ENCODE measurements at regions of chr18 and their contacts with region 1.

Region 1: DNA sequence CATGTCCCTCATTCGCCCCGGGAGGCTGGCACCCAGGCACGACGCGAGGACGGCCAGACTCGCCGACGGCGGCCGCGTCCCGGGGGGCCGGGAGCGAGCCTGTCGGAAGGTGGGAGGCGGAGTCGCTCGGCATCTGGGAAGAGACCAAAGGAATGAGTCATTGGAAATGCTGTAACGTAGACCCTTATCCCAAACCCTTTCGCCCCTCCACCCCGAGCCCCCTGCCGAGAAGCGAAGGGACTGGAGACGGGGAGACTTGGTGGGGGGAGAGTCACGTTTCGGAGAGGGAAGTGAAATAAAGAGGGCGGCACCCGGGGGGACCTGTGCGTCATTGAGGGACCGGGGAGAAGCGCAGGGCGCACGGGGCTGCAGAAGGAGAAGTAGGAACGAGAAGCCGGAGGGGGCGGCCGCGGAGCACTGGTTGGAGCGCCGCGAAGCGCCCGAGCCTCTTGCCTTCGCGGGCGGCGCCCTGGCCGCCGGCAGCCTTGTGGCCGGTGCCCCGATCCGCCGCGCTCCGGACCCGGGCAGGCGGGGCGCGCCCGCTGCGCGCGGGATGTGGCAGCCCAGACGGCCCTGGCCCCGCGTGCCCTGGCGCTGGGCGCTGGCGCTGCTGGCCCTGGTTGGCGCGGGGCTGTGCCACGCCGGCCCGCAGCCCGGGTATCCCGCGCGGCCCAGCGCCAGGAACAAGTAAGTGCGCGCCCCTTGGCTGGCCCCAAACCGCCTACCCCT is at the start of gene EMILIN2:
- DNase-seq: peak; percentile 93
- ATAC-seq: peak; percentile 82
- H3K4me3 ChIP-seq: peak within 1 kb of the TSS; percentile 54 to 76 (median 61)
- H3K4me3 Mint-ChIP-seq: peak within 1 kb of the TSS; percentile 99
- H3K27ac ChIP-seq: peak within 1 kb of the TSS; percentile 56 to 65
- H3K27ac Mint-ChIP-seq: peak within 1 kb of the TSS; percentile 91
- H3K4me1 ChIP-seq: peaks cover 14 to 37% of the 10 kb centered on the region in 2 donors
- H3K4me1 Mint-ChIP-seq: peaks cover 40% of the 10 kb centered on the region
- H3K27me3 ChIP-seq: peaks cover 0 to 41% (median 21%) of the 10 kb centered on the region in 4 experiments
- H3K27me3 Mint-ChIP-seq: peaks cover 18% of the 10 kb centered on the region
- CTCF ChIP-seq: peak; percentile 39
- total RNA-seq, gene EMILIN2: 48.2 and 52.7 TPM in 2 replicates

Region 2: DNA sequence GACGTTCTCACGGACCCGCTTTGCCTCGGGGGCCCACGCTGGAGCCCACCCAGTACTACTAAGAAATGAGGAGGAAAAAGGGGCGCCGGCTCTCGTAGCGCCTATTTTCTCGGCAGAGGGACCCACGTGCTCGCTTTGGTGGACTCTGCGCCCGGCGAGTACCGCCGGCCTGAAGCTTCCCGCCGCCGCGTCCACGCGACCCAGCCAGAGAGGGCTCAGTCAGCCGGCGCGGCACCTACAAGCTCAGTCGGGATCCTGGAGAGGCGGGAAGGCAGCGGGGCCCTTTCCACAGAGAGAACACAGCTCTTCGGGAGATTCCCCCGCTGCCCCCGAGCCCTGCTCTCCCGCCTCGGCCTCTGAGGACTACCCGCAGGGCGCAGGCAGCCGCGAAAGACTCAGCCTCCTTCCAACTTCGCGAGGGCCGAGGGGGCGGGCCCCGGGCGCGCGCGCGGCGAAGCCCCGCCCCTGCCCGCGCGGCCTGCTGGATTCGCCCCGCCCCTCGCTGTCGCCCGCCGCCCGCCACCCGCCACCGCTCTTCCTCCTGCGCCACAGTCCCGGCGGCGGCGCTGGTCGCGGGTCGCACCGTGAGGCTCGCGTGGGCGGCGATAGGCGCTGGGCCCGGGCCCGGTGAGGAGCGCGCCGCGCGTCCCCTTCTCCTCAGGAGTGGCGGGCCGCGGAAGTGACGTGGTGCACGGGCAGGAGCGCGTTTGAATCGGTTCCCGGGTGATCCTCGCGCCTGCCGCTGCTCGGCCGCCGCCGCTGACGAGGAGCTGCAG is 191.4 kb before region 1 on chr18 and contains the start of gene SMCHD1:
- CTCF ChIA-PET with region 1: no interaction called
- POLR2A ChIA-PET with region 1: no interaction called
- intact Hi-C with region 1: loop called (anchors 5 kb)
- DNase-seq: peak; percentile 96
- ATAC-seq: peak; percentile 78
- H3K4me3 ChIP-seq: peak within 1 kb of the TSS; percentile 86 to 99 (median 96)
- H3K4me3 Mint-ChIP-seq: peak within 1 kb of the TSS; percentile 98
- H3K27ac ChIP-seq: peak within 1 kb of the TSS; percentile 97 to 100
- H3K27ac Mint-ChIP-seq: peak within 1 kb of the TSS; percentile 98
- H3K4me1 ChIP-seq: peaks cover 32 to 33% of the 10 kb centered on the region in 2 donors
- H3K4me1 Mint-ChIP-seq: peaks cover 37% of the 10 kb centered on the region
- H3K27me3 ChIP-seq: no peaks in the 10 kb centered on the region
- H3K27me3 Mint-ChIP-seq: no peaks in the 10 kb centered on the region
- CTCF ChIP-seq: no peak
- total RNA-seq, gene SMCHD1: 380 and 443 TPM in 2 replicates

Region 3: GRCh38 chr18:2805970-2806943 is 40.5 kb before region 1 on chr18:
- CTCF ChIA-PET with region 1: no interaction called
- POLR2A ChIA-PET with region 1: no interaction called
- intact Hi-C with region 1: loop called (anchors 2 kb)
- DNase-seq: no peak
- ATAC-seq: no peak
- H3K4me3 ChIP-seq: no peak overlapping the region
- H3K4me3 Mint-ChIP-seq: no peak overlapping the region
- H3K27ac ChIP-seq: no peak overlapping the region
- H3K27ac Mint-ChIP-seq: no peak overlapping the region
- H3K4me1 ChIP-seq: no peaks in the 10 kb centered on the region
- H3K4me1 Mint-ChIP-seq: no peaks in the 10 kb centered on the region
- H3K27me3 ChIP-seq: no peaks in the 10 kb centered on the region
- H3K27me3 Mint-ChIP-seq: no peaks in the 10 kb centered on the region
- CTCF ChIP-seq: no peak

Region 4: DNA sequence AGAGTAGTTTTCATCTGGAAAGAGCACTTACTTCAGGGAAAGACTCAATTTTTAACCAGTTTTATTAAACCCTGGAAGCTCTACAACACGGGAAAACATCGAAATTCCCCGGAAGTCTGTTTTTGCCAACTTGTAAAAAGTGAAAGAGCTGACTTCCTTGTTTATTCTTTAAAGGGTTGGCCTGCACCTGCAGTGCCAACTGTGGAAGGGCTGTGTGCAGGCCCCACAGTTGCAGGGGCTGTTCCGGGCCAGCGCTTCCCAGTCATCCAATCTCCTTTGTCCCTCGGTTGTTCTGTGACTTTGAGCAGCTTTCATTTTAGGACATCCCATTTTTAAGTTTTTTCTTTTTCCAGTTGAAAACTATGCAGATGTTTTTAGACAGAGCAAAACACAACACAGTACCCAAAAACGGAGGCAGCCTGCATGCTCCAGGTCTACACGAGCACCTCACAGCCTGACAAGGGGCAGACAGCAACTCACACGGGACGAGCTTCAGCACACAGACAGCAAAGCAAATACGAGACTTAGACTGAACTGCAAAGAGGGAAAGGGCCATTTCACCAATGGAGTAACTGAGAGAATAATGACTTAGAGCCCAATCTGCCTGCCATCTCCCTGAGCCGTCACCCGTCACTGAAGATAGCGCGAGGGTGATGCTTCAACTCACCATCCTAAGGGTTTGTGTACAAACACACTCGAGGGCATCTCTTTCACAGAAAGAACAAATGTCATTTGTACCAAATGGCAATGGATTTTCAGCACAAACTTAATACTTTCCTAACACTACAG is 70.7 kb after region 1 on chr18:
- CTCF ChIA-PET with region 1: no interaction called
- POLR2A ChIA-PET with region 1: interaction called, 6 read pairs
- intact Hi-C with region 1: loop called (anchors 2 kb)
- DNase-seq: peak; percentile 60
- ATAC-seq: peak; percentile 86
- H3K4me3 ChIP-seq: peak overlapping the region in 2 of 5 experiments; percentile 20 to 34
- H3K4me3 Mint-ChIP-seq: peak overlapping the region; percentile 79
- H3K27ac ChIP-seq: peak overlapping the region; percentile 55 to 74
- H3K27ac Mint-ChIP-seq: peak overlapping the region; percentile 92
- H3K4me1 ChIP-seq: peaks cover 21 to 26% of the 10 kb centered on the region in 2 donors
- H3K4me1 Mint-ChIP-seq: peaks cover 38% of the 10 kb centered on the region
- H3K27me3 ChIP-seq: no peaks in the 10 kb centered on the region
- H3K27me3 Mint-ChIP-seq: no peaks in the 10 kb centered on the region
- CTCF ChIP-seq: no peak

Region 5: DNA sequence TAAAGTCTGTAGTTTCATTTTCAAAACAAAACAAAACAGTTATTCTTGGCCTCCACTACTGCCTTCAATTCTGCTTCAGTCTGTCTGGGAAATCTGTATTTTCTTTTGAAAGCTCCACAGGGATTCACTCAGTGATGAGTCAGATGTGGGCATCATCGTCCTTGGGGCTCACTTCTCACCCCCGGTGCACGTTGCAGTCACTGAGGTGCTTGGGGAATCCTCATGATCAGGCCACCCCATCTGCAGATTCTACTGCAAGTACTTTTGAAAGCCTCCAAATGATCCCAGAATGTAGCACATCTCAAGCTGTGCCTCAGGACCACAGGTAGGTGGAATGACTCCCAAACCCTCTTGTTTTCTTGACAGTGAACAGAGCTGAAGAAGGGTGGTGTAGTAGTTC is 131.8 kb after region 1 on chr18:
- CTCF ChIA-PET with region 1: no interaction called
- POLR2A ChIA-PET with region 1: no interaction called
- intact Hi-C with region 1: loop called (anchors 5 kb)
- DNase-seq: peak; percentile 35
- ATAC-seq: no peak
- H3K4me3 ChIP-seq: peak overlapping the region in 2 of 5 experiments; percentile 5 to 46
- H3K4me3 Mint-ChIP-seq: peak overlapping the region; percentile 77
- H3K27ac ChIP-seq: peak overlapping the region; percentile 78 to 91
- H3K27ac Mint-ChIP-seq: peak overlapping the region; percentile 94
- H3K4me1 ChIP-seq: peaks cover 58 to 61% of the 10 kb centered on the region in 2 donors
- H3K4me1 Mint-ChIP-seq: peaks cover 67% of the 10 kb centered on the region
- H3K27me3 ChIP-seq: no peaks in the 10 kb centered on the region
- H3K27me3 Mint-ChIP-seq: no peaks in the 10 kb centered on the region
- CTCF ChIP-seq: no peak

Region 6: GRCh38 chr18:3261371-3262246 is 414.8 kb after region 1 on chr18 and contains the start of gene MYL12B:
- CTCF ChIA-PET with region 1: no interaction called
- POLR2A ChIA-PET with region 1: interaction called, 3 read pairs
- intact Hi-C with region 1: loop called (anchors 5 kb)
- DNase-seq: peak; percentile 93
- ATAC-seq: peak; percentile 80
- H3K4me3 ChIP-seq: peak within 1 kb of the TSS; percentile 75 to 96 (median 86)
- H3K4me3 Mint-ChIP-seq: peak within 1 kb of the TSS; percentile 88
- H3K27ac ChIP-seq: peak within 1 kb of the TSS; percentile 86 to 97
- H3K27ac Mint-ChIP-seq: peak within 1 kb of the TSS; percentile 100
- H3K4me1 ChIP-seq: peaks cover 70 to 73% of the 10 kb centered on the region in 2 donors
- H3K4me1 Mint-ChIP-seq: peaks cover 77% of the 10 kb centered on the region
- H3K27me3 ChIP-seq: no peaks in the 10 kb centered on the region
- H3K27me3 Mint-ChIP-seq: no peaks in the 10 kb centered on the region
- CTCF ChIP-seq: no peak
- total RNA-seq, gene MYL12B: 124 and 127 TPM in 2 replicates

Measured in B cell (primary cell).